AG04449 (cell line): ENCODE measurements at regions of chr2 and their contacts with region 1.

Region 1: GRCh38 chr2:103161456-103162289 is 399.8 kb downstream of the TMEM182 start:
- DNase-seq: no peak
- H3K4me3 ChIP-seq: no peak overlapping the region
- CTCF ChIP-seq: peak; percentile 33

Region 2: DNA sequence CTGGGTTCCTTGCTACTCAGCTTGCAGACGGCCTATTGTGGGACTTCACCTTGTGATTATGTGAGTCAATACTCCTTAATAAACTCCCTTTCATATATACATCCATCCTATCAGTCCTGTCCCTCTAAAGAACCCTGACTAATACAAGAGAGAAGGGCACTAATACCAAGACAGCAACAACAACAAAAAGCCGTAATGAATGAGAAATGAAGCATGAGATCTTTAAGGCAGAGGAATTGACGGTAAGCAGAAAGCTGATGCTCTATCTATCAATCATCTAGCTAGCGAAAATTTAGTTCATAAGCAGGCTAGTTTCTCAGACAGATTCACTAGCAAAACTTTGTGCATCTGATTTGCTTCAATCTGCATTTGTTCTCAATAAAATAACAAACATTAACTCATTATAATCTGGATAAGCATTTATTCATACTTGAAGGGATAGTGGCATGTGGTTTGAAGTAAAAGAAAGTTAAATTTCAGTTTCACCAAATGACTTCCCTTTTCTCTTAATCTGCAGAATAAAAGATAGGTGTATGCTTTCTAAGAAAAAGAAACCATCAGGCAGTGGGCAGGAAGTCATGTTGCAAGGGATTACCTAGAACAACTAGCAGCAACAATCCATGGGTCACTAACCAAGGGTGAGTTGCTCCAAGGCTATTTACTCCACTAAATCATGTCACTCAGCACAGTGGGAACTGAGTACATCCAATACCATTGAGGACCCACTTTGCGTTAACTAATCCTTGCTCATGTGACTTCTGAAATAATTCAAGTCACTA is 23.4 kb before region 1 on chr2:
- CTCF ChIA-PET with region 1: no interaction called
- POLR2A ChIA-PET with region 1: no interaction called
- DNase-seq: no peak
- H3K4me3 ChIP-seq: no peak overlapping the region
- CTCF ChIP-seq: no peak

Region 3: DNA sequence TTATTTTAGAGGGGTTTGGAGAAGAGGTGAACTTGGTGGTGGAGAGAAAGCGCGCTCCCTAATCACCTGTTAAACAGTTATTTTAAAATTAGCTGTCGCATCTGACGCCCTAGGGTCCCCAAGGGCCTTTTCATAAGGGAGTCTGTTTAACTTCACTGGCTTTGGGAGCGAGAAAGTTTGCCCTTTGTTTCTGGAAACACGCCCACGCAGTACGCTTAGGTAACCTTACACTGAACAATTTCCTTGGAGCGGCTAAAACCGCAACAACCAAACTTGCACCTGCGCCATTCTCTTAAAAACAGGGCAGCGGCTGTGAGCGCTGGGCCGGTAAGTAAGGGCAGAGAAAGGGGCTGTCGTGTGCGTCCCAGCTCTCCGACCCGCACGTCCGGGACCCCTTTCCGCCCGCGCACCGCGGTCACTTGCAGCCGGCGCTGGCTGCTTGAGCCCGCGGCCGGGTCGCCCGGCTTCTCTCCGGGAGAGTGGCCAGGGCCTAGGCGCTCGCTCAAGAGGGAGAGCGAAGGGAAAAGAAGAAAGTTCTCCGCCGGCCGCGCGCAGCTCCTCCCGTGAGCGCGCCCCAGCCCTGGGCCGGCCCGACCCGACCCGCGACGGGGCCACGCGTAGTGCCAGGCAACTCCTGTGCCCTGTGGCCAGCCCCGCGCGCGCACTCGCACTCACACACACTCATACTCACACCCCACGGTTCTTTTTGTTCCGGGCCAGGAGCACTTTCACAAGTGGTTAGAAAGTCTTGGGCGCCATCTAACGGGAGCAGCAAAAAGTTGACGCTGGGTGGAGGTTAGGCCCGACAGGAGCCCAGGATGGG is 1711.4 kb after region 1 on chr2:
- CTCF ChIA-PET with region 1: interaction called, 23 read pairs
- POLR2A ChIA-PET with region 1: no interaction called
- DNase-seq: no peak
- H3K4me3 ChIP-seq: peak overlapping the region; percentile 56
- CTCF ChIP-seq: peak; percentile 72

Region 4: DNA sequence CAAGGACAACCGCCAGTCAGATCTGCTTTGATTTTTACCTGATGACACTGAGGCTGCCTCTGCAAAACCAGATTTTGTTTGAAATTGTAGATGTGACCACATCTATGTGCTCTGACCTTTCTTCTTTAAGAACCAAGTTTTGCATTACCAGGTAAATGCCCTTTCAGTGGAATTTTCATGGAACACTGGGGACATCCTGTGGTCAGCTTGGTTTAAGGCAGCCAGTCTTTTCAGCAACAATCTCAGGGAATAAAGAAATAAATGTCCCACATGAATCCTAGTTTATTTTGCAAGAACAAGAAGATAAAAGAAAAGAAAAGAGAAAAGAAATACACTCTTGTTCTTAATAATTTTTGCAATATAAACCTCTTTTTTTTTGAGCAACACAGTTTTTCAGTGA is 1782.8 kb after region 1 on chr2:
- CTCF ChIA-PET with region 1: interaction called, 10 read pairs
- POLR2A ChIA-PET with region 1: no interaction called
- DNase-seq: no peak
- H3K4me3 ChIP-seq: no peak overlapping the region
- CTCF ChIP-seq: peak; percentile 1